ENCODE measurements at regions of chr12 and their contacts with region 1.

Region 1: GRCh38 chr12:32312049-32312670 is 87.2 kb upstream of the FGD4 start:
- DNase-seq: peak in 1 of 2 donors; percentile 82
- H3K4me3 ChIP-seq: no peak overlapping the region
- H3K27ac ChIP-seq: no peak overlapping the region
- H3K4me1 ChIP-seq: peaks cover 0 to 5% (median 0%) of the 10 kb centered on the region in 4 donors
- H3K27me3 ChIP-seq: no peaks in the 10 kb centered on the region
- CTCF ChIP-seq: peak in 3 of 7 experiments; percentile 31 to 43 (median 40)
- EP300 ChIP-seq: no peak
- POLR2A ChIP-seq: no peak

Region 2: GRCh38 chr12:31659087-31659933 is 652.9 kb before region 1 on chr12 and contains the start of gene ETFBKMT:
- intact Hi-C with region 1: loop called (anchors 10 kb)
- DNase-seq: peak; percentile 91 to 96
- H3K4me3 ChIP-seq: peak within 1 kb of the TSS; percentile 50 to 78 (median 64)
- H3K27ac ChIP-seq: peak within 1 kb of the TSS; percentile 90 to 100 (median 95)
- H3K4me1 ChIP-seq: peaks cover 5 to 15% (median 10%) of the 10 kb centered on the region in 4 donors
- H3K27me3 ChIP-seq: no peaks in the 10 kb centered on the region
- CTCF ChIP-seq: peak in 4 of 7 experiments; percentile 37 to 84 (median 57)
- EP300 ChIP-seq: no peak
- POLR2A ChIP-seq: peak in 1 of 4 donors; percentile 45
- total RNA-seq, gene ETFBKMT: 1.7 to 5.0 (median 4.8) TPM in 4 of 5 donors, not detected in the other

Region 3: GRCh38 chr12:32641287-32641901 is 329.2 kb after region 1 on chr12:
- intact Hi-C with region 1: no loop called
- DNase-seq: no peak
- H3K4me3 ChIP-seq: no peak overlapping the region
- H3K27ac ChIP-seq: no peak overlapping the region
- H3K4me1 ChIP-seq: no peaks in the 10 kb centered on the region
- H3K27me3 ChIP-seq: no peaks in the 10 kb centered on the region
- CTCF ChIP-seq: no peak
- EP300 ChIP-seq: no peak
- POLR2A ChIP-seq: no peak

Measured in stomach (tissue), 19 donors.